BJ (cell line): ENCODE measurements at regions of chr16 and their contacts with region 1.

Region 1: DNA sequence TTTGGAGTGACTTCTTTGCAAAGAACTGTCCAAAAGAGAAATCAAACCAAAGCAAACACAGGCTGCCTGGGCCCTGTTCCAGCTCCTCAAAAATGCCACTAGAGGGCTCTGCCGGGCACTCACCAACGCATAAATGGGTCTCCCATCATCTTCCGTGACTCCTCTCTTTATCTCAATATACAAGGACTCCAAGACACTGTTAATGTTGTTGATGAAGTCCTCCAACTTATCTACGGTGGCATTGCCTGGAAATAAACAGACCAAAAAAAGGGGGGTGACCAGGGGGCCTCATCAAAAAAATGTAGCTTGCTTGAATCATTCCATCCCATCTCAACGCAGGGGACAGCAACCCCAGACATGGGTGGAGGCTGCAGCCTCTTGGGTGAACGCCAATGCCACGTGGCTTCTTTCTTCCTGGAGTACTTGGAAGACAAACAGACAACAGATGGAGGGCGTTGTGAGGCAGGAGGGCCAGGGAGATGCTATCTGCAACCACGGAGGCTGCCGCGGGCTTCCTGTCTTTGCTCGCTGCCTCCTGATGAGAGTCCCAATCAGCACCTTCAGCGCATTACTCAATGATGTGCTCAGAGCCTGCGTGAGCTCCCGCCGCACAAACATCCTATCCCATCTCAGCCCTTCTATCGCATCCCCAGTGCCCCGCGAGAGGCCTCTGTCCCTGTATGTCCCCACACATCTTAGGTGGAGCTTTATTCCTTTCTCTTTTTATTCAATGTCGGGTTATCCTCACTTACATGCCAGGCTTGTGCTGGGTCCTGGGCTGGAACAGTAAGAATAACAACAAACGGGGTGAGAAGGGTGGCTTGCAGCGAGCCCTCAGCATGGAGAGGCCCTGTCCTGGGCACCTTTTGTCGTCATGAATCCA is 32.0 kb downstream of the KDM8 start:
- DNase-seq: peak; percentile 65
- H3K4me3 ChIP-seq: no peak overlapping the region
- H3K27me3 ChIP-seq: no peaks in the 10 kb centered on the region
- CTCF ChIP-seq: peak; percentile 90

Region 2: DNA sequence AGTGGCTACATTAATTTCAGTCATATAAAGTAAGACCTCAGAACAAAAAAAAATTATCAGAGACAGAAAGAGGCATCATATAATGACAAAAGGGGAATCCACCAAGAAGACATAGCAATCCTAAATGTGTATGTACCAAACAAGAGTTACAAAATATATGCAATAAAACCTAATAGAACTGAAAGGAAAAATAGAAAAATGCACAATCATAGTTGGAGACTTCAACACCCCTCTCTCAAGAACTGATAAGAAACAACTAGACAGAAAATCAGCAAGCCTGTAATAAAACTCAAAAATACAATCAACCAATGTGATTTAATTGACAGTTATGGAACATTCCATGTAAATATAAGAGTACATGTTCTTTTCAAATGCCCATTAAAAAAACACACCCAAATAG is 229.9 kb before region 1 on chr16:
- CTCF ChIA-PET with region 1: no interaction called
- POLR2A ChIA-PET with region 1: no interaction called
- DNase-seq: no peak
- H3K4me3 ChIP-seq: no peak overlapping the region
- H3K27me3 ChIP-seq: peaks cover 3% of the 10 kb centered on the region; the same call in 1 of the 2 replicates
- CTCF ChIP-seq: no peak

Region 3: GRCh38 chr16:27222249-27223225 is 12.8 kb before region 1 on chr16:
- CTCF ChIA-PET with region 1: interaction called, 50 read pairs
- POLR2A ChIA-PET with region 1: no interaction called
- DNase-seq: peak; percentile 55
- H3K4me3 ChIP-seq: no peak overlapping the region
- H3K27me3 ChIP-seq: no peaks in the 10 kb centered on the region
- CTCF ChIP-seq: peak; percentile 1; the same call in 1 of the 2 replicates

Region 4: GRCh38 chr16:27251541-27252205 is 16.4 kb after region 1 on chr16:
- CTCF ChIA-PET with region 1: interaction called, 10 read pairs
- POLR2A ChIA-PET with region 1: interaction called, 4 read pairs
- DNase-seq: no peak
- H3K4me3 ChIP-seq: no peak overlapping the region
- H3K27me3 ChIP-seq: no peaks in the 10 kb centered on the region
- CTCF ChIP-seq: no peak

Region 5: GRCh38 chr16:27340654-27341053 is 105.4 kb after region 1 on chr16:
- CTCF ChIA-PET with region 1: interaction called, 10 read pairs
- POLR2A ChIA-PET with region 1: no interaction called
- DNase-seq: no peak
- H3K4me3 ChIP-seq: no peak overlapping the region
- H3K27me3 ChIP-seq: no peaks in the 10 kb centered on the region
- CTCF ChIP-seq: no peak

Region 6: DNA sequence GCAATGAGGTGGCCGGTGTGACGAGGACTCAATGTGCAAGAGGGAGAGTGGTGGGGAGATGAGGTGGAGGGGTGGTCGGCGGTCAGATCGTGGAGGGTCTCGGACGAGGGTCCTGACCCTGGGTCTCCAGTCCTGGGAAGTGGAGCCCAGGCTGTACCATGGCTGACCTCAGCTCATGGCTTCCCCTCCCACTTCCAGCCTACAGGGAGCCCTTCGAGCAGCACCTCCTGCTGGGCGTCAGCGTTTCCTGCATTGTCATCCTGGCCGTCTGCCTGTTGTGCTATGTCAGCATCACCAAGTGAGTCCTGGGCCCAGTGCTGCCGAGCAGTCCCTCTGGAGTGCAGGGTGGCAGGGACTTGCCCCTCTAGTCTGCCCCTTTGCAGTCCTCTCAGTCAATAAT is 120.3 kb after region 1 on chr16:
- CTCF ChIA-PET with region 1: interaction called, 12 read pairs
- POLR2A ChIA-PET with region 1: no interaction called
- DNase-seq: no peak
- H3K4me3 ChIP-seq: no peak overlapping the region
- H3K27me3 ChIP-seq: no peaks in the 10 kb centered on the region
- CTCF ChIP-seq: peak; percentile 37

Region 7: DNA sequence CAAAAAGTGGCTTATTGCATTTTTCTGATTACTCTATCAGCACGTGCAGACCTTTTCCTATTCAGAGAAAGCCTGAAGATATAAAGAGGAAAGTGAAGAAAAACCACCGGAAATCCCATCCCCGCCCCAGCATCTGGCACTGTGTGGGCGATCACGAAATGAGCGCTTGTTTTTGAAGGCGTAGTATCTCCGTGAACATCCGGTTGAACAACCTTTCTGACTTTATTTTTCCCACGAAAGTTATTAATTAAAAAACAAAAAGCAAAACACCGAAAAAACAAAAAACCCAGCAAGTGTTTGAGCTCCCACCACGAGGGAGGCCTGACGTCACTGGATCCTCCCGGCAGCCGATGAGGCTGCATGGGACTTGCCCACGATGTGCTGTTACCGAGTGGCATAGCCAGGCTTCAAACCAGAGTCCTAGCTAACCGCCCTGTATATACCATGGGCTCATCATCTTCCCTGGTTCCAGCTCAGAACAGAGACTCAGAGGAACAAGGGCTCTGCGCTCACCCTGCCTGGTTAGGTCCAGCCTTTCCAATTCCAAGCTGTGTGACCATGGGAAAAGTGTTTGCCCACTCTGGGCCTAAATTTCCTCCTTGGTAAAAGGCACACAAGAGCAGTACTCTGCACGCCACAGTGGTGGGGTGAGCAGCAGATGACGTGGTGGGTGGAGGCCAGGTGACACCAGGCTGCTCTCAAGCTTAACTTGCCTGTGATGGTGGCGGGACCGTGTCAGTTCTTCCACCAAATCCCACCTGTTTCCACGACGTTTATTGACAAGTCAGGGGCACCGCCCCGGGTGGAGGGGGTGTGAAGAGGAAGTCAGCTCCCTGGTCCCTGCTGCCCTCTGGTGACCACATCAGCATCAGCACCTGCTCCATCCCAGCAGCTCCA is 132.4 kb after region 1 on chr16:
- CTCF ChIA-PET with region 1: interaction called, 206 read pairs
- POLR2A ChIA-PET with region 1: no interaction called
- DNase-seq: no peak
- H3K4me3 ChIP-seq: 0 out of 2 replicates have a peak overlapping the region, but pooled peaks have one; percentile 1
- H3K27me3 ChIP-seq: no peaks in the 10 kb centered on the region
- CTCF ChIP-seq: peak; percentile 92

Region 8: DNA sequence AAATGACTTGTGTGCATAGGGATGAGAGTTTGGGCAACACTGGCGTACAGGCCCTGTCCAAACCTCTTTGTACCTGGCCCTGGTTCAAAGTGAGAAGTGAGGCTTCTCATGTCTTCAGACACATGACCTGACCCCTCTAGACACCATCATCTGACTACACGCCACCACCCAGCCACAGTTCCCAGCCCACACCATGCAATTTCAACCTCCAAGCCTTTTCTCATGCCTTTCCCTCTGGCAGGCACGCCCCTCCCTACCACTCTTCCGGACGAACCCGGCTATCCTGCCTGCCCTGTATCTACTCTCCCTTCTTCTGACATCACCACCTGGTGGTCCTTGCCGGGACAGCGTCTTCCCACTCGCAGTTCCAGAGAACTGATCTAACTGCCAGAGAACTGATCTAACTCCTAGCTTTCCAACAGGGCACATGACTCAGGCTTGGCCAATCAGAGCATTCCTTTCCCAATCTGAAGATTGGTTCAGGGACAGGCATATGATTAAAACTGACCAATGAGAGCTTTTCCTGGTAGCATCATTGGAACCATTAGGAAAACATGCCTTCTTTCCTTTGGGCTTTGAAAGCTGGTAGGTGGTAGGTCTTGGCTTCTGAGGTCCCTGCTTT is 139.6 kb after region 1 on chr16:
- CTCF ChIA-PET with region 1: interaction called, 206 read pairs
- POLR2A ChIA-PET with region 1: interaction called, 6 read pairs
- DNase-seq: no peak
- H3K4me3 ChIP-seq: no peak overlapping the region
- H3K27me3 ChIP-seq: no peaks in the 10 kb centered on the region
- CTCF ChIP-seq: peak; percentile 55